ENCODE measurements at regions of chr17 and their contacts with region 1.

Region 1: DNA sequence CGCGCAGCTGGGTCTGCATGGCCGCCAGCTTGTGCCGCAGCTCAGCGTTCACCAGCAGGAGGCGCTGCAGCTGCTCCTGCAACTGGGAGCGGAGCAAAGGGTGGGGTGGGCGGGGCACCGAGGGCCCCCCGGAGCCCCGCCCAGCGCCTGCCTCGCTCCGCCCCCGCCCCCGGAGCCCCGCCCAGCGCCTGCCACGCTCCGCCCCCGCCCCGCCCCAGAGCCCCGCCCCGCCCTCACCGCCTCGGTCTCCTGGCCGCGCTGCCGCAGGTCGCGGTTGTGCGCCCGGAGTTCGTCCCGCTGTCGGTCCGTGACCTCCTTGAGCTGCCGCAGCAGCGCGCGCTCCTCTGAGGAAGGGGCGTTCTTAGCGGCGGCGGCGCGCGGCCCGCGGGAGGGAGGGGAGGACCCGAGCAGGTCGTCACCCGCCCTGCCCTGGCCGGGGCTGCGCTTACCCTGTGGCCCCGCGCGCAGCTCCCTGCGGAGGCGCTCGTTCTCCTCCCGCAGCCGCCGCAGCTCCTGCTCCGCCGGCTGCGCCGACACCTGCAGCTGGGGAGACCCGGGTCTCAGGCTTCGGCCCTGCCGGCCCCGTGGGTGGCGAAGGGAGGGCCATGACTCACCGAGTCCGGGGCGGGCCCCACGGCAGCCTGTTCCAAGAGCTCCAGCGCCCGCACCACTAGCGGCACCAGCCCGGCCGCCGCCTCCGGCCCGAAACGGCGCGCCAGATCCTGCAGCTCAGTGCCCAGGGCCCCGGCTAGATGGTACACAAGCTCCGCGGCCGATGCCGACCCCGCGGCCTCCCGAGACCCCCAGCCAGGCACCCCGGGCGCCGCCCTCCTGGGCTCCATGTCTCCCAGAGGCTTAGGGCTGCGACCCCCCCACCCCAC is 463 bp downstream of the RILP start:
- DNase-seq: peak; percentile 91
- H3K4me3 Mint-ChIP-seq: peak overlapping the region; percentile 60
- H3K27ac Mint-ChIP-seq: no peak overlapping the region
- H3K4me1 Mint-ChIP-seq: peaks cover 18% of the 10 kb centered on the region
- H3K27me3 Mint-ChIP-seq: no peaks in the 10 kb centered on the region

Region 2: GRCh38 chr17:1532836-1533602 is 116.2 kb before region 1 on chr17:
- intact Hi-C with region 1: no loop called
- DNase-seq: peak; percentile 28
- H3K4me3 Mint-ChIP-seq: no peak overlapping the region
- H3K27ac Mint-ChIP-seq: no peak overlapping the region
- H3K4me1 Mint-ChIP-seq: no peaks in the 10 kb centered on the region
- H3K27me3 Mint-ChIP-seq: no peaks in the 10 kb centered on the region

Region 3: DNA sequence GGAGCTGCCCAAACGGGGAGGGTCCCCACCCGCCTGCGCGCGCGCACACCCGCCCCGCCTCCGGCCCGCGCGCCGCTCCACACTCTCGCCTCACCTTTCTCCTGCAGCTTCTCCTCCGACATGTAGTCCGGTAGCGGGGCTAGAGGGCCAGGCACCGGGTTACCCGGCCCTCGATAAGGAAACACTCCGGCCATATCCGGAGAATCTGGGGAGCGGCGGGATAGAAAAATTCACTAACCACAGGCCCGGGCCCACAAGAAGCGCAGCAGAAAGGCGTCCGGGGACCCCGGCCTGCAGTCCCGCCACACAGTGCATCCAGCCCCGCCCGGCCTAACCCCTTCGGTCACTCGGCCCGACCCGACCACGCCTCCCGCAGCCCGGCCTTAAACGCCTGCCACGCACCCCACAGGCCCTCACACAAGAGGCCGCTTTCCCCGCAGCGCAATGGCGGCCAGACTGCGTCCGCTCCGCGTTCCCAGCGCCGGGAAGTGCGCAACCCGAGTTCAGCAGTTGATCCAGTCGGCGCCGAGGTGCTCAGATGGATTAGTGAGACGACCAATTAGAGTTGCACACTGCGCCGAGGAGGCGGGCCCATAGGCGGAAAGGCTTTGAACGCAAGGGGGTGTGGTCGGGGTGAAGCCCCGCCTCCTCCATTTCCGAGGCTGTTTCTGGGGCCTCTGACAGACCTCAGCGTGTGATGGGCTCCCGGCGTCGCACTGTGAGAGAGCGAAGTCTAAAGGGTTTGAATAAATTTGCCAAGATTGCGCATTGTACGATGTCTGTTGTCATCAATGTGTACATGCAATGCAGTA is 35.4 kb after region 1 on chr17 and contains the start of gene PRPF8:
- intact Hi-C with region 1: loop called (anchors 1 kb)
- DNase-seq: peak; percentile 98
- H3K4me3 Mint-ChIP-seq: peak within 1 kb of the TSS; percentile 98
- H3K27ac Mint-ChIP-seq: peak within 1 kb of the TSS; percentile 94
- H3K4me1 Mint-ChIP-seq: peaks cover 23% of the 10 kb centered on the region
- H3K27me3 Mint-ChIP-seq: no peaks in the 10 kb centered on the region
- total RNA-seq, gene PRPF8: 435 and 439 TPM in 2 replicates

Region 4: GRCh38 chr17:2041561-2042366 is 392.6 kb after region 1 on chr17 and contains the start of gene OVCA2:
- intact Hi-C with region 1: loop called (anchors 10 kb)
- DNase-seq: peak; percentile 96
- H3K4me3 Mint-ChIP-seq: peak within 1 kb of the TSS; percentile 89
- H3K27ac Mint-ChIP-seq: peak within 1 kb of the TSS; percentile 91
- H3K4me1 Mint-ChIP-seq: peaks cover 21% of the 10 kb centered on the region
- H3K27me3 Mint-ChIP-seq: no peaks in the 10 kb centered on the region
- total RNA-seq, gene OVCA2: 29.9 and 35.8 TPM in 2 replicates